HepG2 (cell line): ENCODE measurements at regions of chr5 and their contacts with region 1.

Region 1: DNA sequence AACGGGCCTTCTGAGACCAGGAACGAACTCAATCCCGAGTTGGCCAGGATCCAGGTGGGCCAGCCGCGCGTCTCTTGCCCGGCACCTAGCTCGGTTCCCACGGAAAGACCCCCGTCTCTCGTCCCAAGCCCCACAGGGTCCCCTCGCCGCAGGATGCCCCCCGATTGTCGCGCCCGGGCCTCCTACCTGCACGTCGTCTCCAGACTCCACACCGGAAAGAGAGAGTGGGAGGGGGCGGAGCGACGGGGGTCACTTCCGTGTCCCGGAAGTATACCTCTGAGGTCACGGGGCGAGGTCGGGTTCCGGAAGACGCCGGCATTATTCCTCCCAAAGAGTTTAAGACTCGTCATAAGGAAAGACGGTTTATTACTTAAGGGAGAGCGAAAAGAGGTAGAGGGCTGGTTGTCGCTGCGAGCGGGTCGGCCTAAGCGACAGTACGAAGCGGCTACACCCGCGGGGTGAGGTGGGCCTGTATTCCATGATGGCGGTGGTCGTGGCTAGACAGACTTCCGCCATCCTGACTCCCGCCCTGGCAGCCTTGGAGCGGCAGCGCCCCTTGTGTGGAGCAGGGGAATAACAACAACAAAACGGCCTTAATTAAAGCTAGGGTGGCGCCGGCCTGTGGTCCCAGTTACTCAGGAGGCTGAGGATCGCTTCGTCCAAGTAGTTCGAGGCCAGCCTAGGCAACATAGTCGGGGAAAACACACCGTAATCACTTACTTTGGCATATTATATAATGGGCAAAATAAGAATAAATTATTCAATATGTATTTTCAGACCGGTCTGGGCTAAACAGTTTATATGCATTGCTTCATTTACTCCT is at the start of gene RPS14:
- DNase-seq: peak; percentile 87
- ATAC-seq: peak; percentile 96
- H3K4me3 ChIP-seq: peak within 1 kb of the TSS; percentile 86 to 93 (median 90)
- H3K27ac ChIP-seq: peak within 1 kb of the TSS; percentile 95
- H3K4me1 ChIP-seq: peaks cover 33% of the 10 kb centered on the region
- H3K27me3 ChIP-seq: no peaks in the 10 kb centered on the region; a peak in 1 of 5 replicates
- CTCF ChIP-seq: peak; percentile 92
- EP300 ChIP-seq: no peak
- POLR2A ChIP-seq: peak; percentile 92 to 96
- RAD21 ChIP-seq: peak; percentile 42; the same call in 1 of the 2 replicates
- total RNA-seq, gene RPS14: 2,116 and 2,466 TPM in 2 replicates

Region 2: GRCh38 chr5:150409638-150410523 is 39.8 kb before region 1 on chr5:
- CTCF ChIA-PET with region 1: no interaction called
- POLR2A ChIA-PET with region 1: interaction called, 24 read pairs
- in situ Hi-C with region 1: no loop called
- intact Hi-C with region 1: no loop called
- DNase-seq: peak; percentile 77
- ATAC-seq: peak; percentile 83
- H3K4me3 ChIP-seq: peak overlapping the region in 1 of 3 experiments; percentile 12; a peak in 1 of 6 replicates
- H3K27ac ChIP-seq: no peak overlapping the region
- H3K4me1 ChIP-seq: peaks cover 38% of the 10 kb centered on the region
- H3K27me3 ChIP-seq: no peaks in the 10 kb centered on the region
- CTCF ChIP-seq: no peak
- EP300 ChIP-seq: no peak
- POLR2A ChIP-seq: no peak
- RAD21 ChIP-seq: no peak

Region 3: GRCh38 chr5:150486402-150487198 is 36.9 kb after region 1 on chr5:
- CTCF ChIA-PET with region 1: no interaction called
- POLR2A ChIA-PET with region 1: interaction called, 11 read pairs
- in situ Hi-C with region 1: no loop called
- intact Hi-C with region 1: no loop called
- DNase-seq: peak; percentile 71
- ATAC-seq: peak; percentile 39
- H3K4me3 ChIP-seq: peak overlapping the region; percentile 88 to 94 (median 91)
- H3K27ac ChIP-seq: peak overlapping the region; percentile 96
- H3K4me1 ChIP-seq: peaks cover 81% of the 10 kb centered on the region
- H3K27me3 ChIP-seq: peaks cover 2 to 8% of the 10 kb centered on the region in 2 experiments; a peak in 2 of 5 replicates
- CTCF ChIP-seq: peak; percentile 22
- EP300 ChIP-seq: no peak
- POLR2A ChIP-seq: peak; percentile 20 to 34; a peak in 1 of 4 replicates
- RAD21 ChIP-seq: peak; percentile 39; the same call in 1 of the 2 replicates

Region 4: DNA sequence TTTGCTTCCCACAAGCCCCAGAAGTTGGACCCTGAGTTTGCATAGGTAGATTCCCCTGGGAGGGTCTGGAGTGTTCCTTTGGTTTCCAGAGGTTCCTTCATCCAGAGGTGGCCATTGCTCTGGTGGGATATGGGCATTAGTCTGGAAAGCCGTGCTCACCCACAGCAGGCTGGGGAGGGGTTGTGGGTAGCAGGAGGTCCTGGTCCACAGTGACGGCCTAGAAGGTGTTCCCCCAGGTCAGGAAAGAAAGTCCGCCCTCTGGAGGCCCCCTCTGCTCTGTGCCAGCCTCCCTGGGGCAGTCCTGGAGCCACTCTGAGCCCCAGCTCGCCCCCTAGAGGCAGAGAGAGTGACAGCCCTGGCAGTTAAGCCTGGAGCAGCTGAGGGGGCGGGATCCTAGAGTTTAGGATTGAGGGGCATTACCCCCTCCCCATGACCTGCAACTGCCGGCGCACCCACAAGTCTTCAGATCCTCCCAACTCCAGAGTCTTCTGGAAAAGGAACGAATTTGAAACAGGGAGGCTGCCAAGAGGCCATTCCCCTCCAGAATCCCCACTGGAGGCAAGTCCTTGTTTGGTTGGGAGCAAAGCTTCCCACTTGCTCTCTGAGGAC is 95.0 kb after region 1 on chr5:
- CTCF ChIA-PET with region 1: interaction called, 5 read pairs
- POLR2A ChIA-PET with region 1: interaction called, 29 read pairs
- in situ Hi-C with region 1: loop called (anchors 10 kb)
- intact Hi-C with region 1: no loop called
- DNase-seq: peak; percentile 80
- ATAC-seq: peak; percentile 71
- H3K4me3 ChIP-seq: no peak overlapping the region; a peak in 1 of 6 replicates
- H3K27ac ChIP-seq: peak overlapping the region; percentile 89
- H3K4me1 ChIP-seq: peaks cover 54% of the 10 kb centered on the region
- H3K27me3 ChIP-seq: no peaks in the 10 kb centered on the region
- CTCF ChIP-seq: peak; percentile 98
- EP300 ChIP-seq: 0 out of 4 replicates have a peak, but pooled peaks of 1 of the 2 experiments have one; percentile 40
- POLR2A ChIP-seq: peak in 1 of 2 experiments; percentile 31; a peak in 1 of 4 replicates
- RAD21 ChIP-seq: peak; percentile 95

Region 5: DNA sequence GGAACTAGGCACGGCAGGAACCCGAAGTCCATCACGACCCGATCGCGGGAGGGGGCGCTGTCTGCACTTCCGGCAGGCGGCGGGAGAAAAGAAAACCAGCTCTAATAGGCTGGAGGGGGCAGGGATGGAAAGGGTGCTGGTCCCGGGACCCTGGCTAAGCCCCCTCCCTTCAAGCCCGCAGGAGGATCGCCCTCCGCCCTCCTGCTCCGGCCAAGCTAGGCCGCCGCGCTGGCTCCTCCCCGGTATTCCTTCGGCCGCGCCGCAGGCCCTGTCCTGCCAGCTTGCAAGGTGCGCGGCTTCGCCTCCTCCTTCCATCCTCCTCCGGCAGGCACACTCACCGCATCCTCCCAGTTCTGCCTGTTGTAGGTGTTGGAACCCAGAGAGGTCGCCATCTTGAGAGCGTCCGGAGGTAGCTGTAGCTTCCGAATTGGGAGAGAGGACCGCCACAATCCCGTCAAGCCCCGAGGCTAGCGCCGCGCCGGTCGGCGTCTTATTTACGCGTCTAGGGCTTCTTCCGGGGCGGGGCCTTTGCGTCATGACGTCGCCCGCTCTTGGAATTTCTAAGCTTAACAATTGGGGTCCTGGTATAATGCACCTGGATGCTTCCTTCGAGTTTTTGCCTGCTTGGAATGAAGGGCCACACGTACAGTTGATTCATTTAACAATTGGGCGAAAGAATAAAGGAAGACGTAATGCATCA is 251.0 kb after region 1 on chr5 and contains the start of gene RBM22:
- CTCF ChIA-PET with region 1: no interaction called
- POLR2A ChIA-PET with region 1: interaction called, 12 read pairs
- in situ Hi-C with region 1: no loop called
- intact Hi-C with region 1: no loop called
- DNase-seq: peak; percentile 77
- ATAC-seq: peak; percentile 97
- H3K4me3 ChIP-seq: peak within 1 kb of the TSS; percentile 97 to 100 (median 99)
- H3K27ac ChIP-seq: peak within 1 kb of the TSS; percentile 84
- H3K4me1 ChIP-seq: peaks cover 21% of the 10 kb centered on the region
- H3K27me3 ChIP-seq: no peaks in the 10 kb centered on the region; a peak in 1 of 5 replicates
- CTCF ChIP-seq: peak; percentile 72
- EP300 ChIP-seq: 0 out of 4 replicates have a peak, but pooled peaks of 1 of the 2 experiments have one; percentile 19
- POLR2A ChIP-seq: peak; percentile 73 to 85
- RAD21 ChIP-seq: peak; percentile 7; the same call in 1 of the 2 replicates
- total RNA-seq, gene RBM22: 27.7 and 28.3 TPM in 2 replicates